Esophagus squamous epithelium (tissue), 5 donors: ENCODE measurements at regions of chr1 and their contacts with region 1.

Region 1: GRCh38 chr1:25796811-25797458 is 3.1 kb upstream of the SELENON start:
- DNase-seq: no peak
- H3K4me3 ChIP-seq: no peak overlapping the region
- H3K27ac ChIP-seq: peak overlapping the region; percentile 17 to 71 (median 60)
- H3K4me1 ChIP-seq: peaks cover 24 to 58% (median 25%) of the 10 kb centered on the region in 3 donors
- H3K27me3 ChIP-seq: no peaks in the 10 kb centered on the region
- CTCF ChIP-seq: peak; percentile 55 to 92 (median 88)
- POLR2A ChIP-seq: no peak

Region 2: DNA sequence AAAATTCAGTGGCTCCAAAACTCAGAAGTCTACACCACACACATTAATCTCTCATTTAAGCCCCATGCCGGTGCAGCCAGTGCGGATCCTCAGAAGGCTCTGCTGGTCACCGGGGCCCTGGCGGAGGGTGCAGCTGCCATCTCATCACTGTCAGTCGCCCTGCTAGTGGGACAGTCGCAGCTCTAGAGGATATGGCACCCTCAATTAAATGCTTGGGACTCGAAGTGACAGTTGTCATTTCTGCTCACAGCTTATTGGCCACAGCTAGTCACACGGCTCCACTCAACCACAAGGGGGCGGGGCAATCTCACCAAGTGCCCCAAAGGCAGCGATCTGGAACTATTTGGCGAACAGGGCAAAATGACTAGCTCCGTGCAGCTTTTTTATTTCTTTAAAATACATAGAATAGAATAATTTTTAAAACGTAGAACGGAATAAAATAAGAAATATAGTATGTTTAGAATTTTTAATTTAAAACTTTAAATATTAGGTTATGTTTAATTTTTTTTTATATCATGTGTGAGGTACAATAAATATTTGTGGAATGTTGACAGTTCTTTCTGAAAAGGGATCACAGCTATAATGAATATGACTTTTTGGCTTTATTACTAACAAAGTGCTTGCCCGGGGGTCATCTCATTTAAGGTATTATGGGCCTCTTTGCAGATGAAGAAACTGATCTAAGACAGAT is 188.3 kb before region 1 on chr1:
- intact Hi-C with region 1: loop called (anchors 5 kb)
- DNase-seq: no peak
- H3K4me3 ChIP-seq: peak overlapping the region in 1 of 4 donors; percentile 39
- H3K27ac ChIP-seq: no peak overlapping the region
- H3K4me1 ChIP-seq: peaks cover 9 to 31% (median 11%) of the 10 kb centered on the region in 3 donors
- H3K27me3 ChIP-seq: no peaks in the 10 kb centered on the region
- CTCF ChIP-seq: peak; percentile 72 to 87 (median 78)
- POLR2A ChIP-seq: no peak

Region 3: GRCh38 chr1:25642574-25643108 is 154.3 kb before region 1 on chr1:
- intact Hi-C with region 1: no loop called
- DNase-seq: no peak
- H3K4me3 ChIP-seq: peak overlapping the region in 1 of 4 donors; percentile 15
- H3K27ac ChIP-seq: peak overlapping the region in 2 of 4 donors; percentile 44 to 72
- H3K4me1 ChIP-seq: peaks cover 3 to 25% (median 7%) of the 10 kb centered on the region in 3 donors
- H3K27me3 ChIP-seq: no peaks in the 10 kb centered on the region
- CTCF ChIP-seq: no peak
- POLR2A ChIP-seq: no peak

Region 4: DNA sequence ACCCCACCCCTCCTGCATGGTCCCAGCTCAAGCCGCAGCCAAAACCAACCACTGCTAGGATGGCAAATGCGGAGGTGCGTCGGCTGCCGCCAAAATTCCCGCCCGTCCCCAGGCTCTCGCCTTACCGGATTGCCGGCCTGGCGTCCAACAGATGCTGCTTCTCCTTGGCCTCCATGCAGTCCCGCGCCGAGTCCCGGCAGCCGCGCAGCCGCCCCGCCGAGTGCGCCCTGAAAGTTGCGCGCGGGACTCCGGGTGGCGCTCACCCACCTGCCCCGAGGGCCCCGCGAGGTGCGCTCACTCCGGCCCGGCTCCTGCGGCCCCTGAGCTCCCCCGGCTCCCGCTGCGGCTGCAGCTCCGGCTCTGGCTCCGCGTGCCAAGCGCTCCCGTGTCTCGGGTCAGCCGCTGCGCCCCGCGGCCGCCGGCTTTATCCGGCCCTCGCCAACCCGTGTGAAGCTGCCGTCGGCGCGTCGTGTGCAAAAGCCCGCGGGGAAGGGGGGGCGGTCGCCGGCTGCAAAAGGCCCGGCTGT is 248.8 kb after region 1 on chr1 and contains the start of gene SLC30A2:
- intact Hi-C with region 1: no loop called
- DNase-seq: no peak
- H3K4me3 ChIP-seq: peak within 1 kb of the TSS in 3 of 4 donors; percentile 2 to 52 (median 32)
- H3K27ac ChIP-seq: no peak within 1 kb of the TSS
- H3K4me1 ChIP-seq: peaks cover 7 to 18% (median 16%) of the 10 kb centered on the region in 3 donors
- H3K27me3 ChIP-seq: peaks cover 9 to 100% (median 16%) of the 10 kb centered on the region in 4 donors
- CTCF ChIP-seq: no peak
- POLR2A ChIP-seq: no peak
- total RNA-seq, gene SLC30A2: not detected